GM10248 (cell line): ENCODE measurements at regions of chr3 and their contacts with region 1.

Region 1: DNA sequence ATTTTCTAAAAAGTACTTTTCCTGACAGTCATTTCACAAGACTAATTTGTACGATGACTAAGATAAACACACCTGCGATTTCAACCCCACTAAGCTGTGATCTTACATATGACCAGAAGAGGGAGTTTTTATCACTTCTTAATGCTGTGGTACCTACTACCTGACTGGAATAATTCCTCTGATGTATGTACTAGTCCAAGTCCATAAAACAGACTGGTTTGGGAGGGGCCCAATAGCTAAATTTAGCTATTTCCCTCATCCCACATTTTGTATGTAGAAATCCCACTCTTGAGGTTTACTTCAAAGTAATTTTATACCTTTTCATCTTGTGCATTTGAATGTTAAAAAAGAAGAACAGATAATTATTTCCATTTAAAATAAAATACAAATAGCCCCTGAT is 49.7 kb upstream of the SCAANT1 start:
- DNase-seq: peak; percentile 37
- CTCF ChIP-seq: peak; percentile 60

Region 2: GRCh38 chr3:63921741-63922482 is 40.0 kb before region 1 on chr3:
- CTCF ChIA-PET with region 1: interaction called, 12 read pairs
- POLR2A ChIA-PET with region 1: no interaction called
- DNase-seq: peak; percentile 42
- CTCF ChIP-seq: no peak

Region 3: DNA sequence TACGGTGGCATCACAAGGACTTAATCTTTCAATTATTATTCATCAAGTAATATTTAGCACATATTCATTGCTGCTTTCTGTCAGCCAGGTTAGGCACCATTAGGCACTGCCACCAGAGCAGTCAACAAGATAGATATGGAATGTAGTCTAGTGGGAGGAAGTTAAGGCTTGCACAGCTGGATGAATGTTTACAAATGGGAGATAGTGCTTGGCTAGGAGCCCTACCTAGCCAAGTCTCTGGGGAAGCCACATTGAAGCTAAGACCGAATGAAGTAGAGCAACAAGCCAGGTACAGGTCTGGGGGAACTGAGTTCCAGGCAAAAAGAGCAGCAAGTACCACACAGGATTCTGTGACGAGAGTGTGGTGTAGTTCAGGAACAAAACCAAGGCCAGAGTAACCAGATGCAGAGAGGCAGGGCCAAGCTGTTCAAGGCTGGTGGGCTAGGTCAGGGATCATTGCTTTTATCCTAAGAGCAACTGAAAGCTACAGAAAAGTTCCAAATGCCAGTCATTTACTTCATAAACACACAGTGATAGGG is 16.3 kb before region 1 on chr3:
- CTCF ChIA-PET with region 1: interaction called, 37 read pairs
- POLR2A ChIA-PET with region 1: no interaction called
- DNase-seq: no peak
- CTCF ChIP-seq: no peak

Region 4: GRCh38 chr3:63951492-63952247 is 10.2 kb before region 1 on chr3:
- CTCF ChIA-PET with region 1: interaction called, 37 read pairs
- POLR2A ChIA-PET with region 1: no interaction called
- DNase-seq: no peak
- CTCF ChIP-seq: no peak

Region 5: GRCh38 chr3:63975723-63976122 is 13.8 kb after region 1 on chr3:
- CTCF ChIA-PET with region 1: interaction called, 106 read pairs
- POLR2A ChIA-PET with region 1: no interaction called
- DNase-seq: no peak
- CTCF ChIP-seq: no peak

Region 6: DNA sequence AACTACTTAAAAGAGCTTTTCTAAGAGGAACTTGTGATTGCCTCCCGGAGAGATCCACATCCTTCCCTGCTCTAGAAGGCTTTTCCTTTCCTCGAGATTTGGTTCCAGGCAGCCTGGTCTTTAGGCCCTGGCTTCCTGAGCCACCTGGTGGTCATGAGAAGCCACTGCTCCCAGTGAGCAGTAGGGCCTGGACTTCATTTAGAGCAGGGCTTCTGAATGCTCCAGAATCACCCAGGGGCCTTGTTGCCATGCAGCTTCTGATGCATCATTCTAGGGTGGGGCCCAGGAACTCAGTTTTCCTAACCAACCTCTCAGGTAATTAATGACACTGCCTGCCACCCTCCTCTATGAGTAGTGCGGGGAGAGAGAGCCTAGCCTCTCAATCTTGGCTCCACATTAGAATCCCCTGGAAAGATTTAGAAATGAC is 31.8 kb after region 1 on chr3:
- CTCF ChIA-PET with region 1: interaction called, 42 read pairs
- POLR2A ChIA-PET with region 1: no interaction called
- DNase-seq: peak; percentile 70
- CTCF ChIP-seq: peak; percentile 89

Region 7: GRCh38 chr3:64023187-64023848 is 61.4 kb after region 1 on chr3 and contains the start of gene PSMD6:
- CTCF ChIA-PET with region 1: interaction called, 11 read pairs
- POLR2A ChIA-PET with region 1: no interaction called
- DNase-seq: peak; percentile 91
- CTCF ChIP-seq: peak; percentile 100